CD4-positive, alpha-beta memory T cell (primary cell): ENCODE measurements at regions of chr2 and their contacts with region 1.

Region 1: DNA sequence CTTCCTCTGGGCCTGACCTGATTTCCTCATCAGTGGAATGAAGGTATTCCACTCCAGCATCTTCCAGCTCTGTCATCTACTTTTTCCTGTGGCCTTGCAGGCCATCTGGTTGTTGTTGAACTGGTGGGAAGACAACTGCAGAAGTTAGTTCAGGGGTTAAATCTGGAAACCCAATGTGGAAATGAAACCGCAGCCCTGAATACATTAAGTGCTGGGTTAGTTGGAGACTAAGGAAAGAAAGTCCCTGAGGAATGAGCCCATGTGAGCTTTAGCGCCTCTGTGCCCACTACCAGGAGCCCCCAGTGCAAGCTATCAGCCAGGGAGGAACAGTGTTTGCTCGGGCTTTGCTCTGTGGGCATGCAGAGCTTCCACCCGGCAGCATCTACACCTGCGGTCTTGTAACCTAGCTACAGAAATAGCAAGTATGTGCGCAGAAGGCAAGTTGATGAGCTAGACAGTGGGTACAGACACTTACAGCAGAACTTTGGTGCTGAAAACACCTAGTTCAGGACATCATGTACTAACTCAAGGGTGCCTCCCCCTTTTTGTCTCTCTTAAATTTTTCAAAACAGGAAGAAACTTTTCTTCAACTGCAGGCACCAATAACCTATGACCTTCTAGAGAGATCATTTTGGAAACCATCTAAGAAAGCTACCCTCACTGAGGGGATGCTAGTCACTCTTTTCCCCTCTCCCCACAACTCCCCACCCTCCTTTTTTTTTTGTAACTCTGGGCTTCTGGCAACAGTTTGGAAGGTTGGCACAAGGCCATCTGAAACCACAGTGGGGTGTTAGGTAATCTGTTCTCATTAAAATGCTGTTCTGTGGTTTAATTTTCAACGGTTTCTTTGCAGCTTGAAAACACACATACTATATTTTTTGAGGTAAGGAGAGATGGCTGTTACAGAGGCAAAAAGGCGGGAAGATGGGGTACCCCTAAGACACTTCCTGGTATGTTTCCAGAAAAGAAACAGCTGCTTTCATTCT is 18.3 kb upstream of the CXCR4 start:
- DNase-seq: peak; percentile 93 to 96 (median 95)
- H3K4me3 ChIP-seq: peak overlapping the region in 1 of 2 donors; percentile 18
- H3K4me3 Mint-ChIP-seq: peak overlapping the region; percentile 70 to 92 (median 80)
- H3K27ac ChIP-seq: peak overlapping the region; percentile 95
- H3K27ac Mint-ChIP-seq: peak overlapping the region; percentile 96 to 100 (median 99)
- H3K4me1 ChIP-seq: peaks cover 98% of the 10 kb centered on the region
- H3K4me1 Mint-ChIP-seq: peaks cover 72 to 98% (median 89%) of the 10 kb centered on the region in 4 donors
- H3K27me3 ChIP-seq: no peaks in the 10 kb centered on the region
- H3K27me3 Mint-ChIP-seq: no peaks in the 10 kb centered on the region

Region 2: DNA sequence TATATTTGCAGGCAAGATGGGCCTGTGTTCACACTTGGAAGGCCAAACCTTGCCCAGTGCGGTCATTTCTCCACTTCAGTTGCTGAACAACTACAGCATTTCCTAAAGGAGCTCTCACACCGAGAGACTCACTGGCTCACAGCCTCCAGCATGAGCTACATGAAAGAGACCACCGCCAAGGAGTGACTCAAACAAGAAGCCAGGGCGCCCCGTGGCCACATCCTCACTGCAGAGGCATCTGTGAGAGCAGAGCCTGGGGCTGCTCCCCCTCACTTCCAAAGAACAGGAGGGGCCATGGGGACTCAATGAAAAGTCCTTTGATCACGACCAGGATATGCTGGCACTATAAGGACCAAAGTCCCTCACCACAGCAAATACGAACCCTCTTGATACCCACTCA is 1467.4 kb before region 1 on chr2:
- CTCF ChIA-PET with region 1: no interaction called
- POLR2A ChIA-PET with region 1: no interaction called
- intact Hi-C with region 1: loop called (anchors 5 kb)
- DNase-seq: peak; percentile 82 to 96 (median 87)
- H3K4me3 ChIP-seq: peak overlapping the region in 1 of 2 donors; percentile 11
- H3K4me3 Mint-ChIP-seq: peak overlapping the region; percentile 45 to 77 (median 60)
- H3K27ac ChIP-seq: peak overlapping the region; percentile 59
- H3K27ac Mint-ChIP-seq: peak overlapping the region; percentile 84 to 99 (median 93)
- H3K4me1 ChIP-seq: peaks cover 77% of the 10 kb centered on the region
- H3K4me1 Mint-ChIP-seq: peaks cover 65 to 97% (median 86%) of the 10 kb centered on the region in 4 donors
- H3K27me3 ChIP-seq: no peaks in the 10 kb centered on the region
- H3K27me3 Mint-ChIP-seq: peaks cover 0 to 1% of the 10 kb centered on the region in 2 donors

Region 3: GRCh38 chr2:135701442-135701841 is 434.8 kb before region 1 on chr2:
- CTCF ChIA-PET with region 1: no interaction called
- POLR2A ChIA-PET with region 1: no interaction called
- intact Hi-C with region 1: no loop called
- DNase-seq: no peak
- H3K4me3 ChIP-seq: no peak overlapping the region
- H3K4me3 Mint-ChIP-seq: no peak overlapping the region
- H3K27ac ChIP-seq: no peak overlapping the region
- H3K27ac Mint-ChIP-seq: peak overlapping the region in 3 of 7 donors; percentile 1 to 68 (median 20)
- H3K4me1 ChIP-seq: no peaks in the 10 kb centered on the region
- H3K4me1 Mint-ChIP-seq: no peaks in the 10 kb centered on the region
- H3K27me3 ChIP-seq: no peaks in the 10 kb centered on the region
- H3K27me3 Mint-ChIP-seq: no peaks in the 10 kb centered on the region

Region 4: GRCh38 chr2:135741395-135742324 is 394.6 kb before region 1 on chr2 and contains the start of gene UBXN4:
- CTCF ChIA-PET with region 1: no interaction called
- POLR2A ChIA-PET with region 1: interaction called, 3 read pairs
- intact Hi-C with region 1: loop called (anchors 5 kb)
- DNase-seq: peak; percentile 88 to 97 (median 91)
- H3K4me3 ChIP-seq: peak within 1 kb of the TSS; percentile 53 to 80
- H3K4me3 Mint-ChIP-seq: peak within 1 kb of the TSS; percentile 94 to 99 (median 97)
- H3K27ac ChIP-seq: peak within 1 kb of the TSS; percentile 97
- H3K27ac Mint-ChIP-seq: peak within 1 kb of the TSS in 6 of 7 donors; percentile 96 to 99 (median 97)
- H3K4me1 ChIP-seq: peaks cover 40% of the 10 kb centered on the region
- H3K4me1 Mint-ChIP-seq: peaks cover 29 to 43% (median 37%) of the 10 kb centered on the region in 4 donors
- H3K27me3 ChIP-seq: no peaks in the 10 kb centered on the region
- H3K27me3 Mint-ChIP-seq: no peaks in the 10 kb centered on the region
- total RNA-seq, gene UBXN4: 116 to 121 TPM

Region 5: DNA sequence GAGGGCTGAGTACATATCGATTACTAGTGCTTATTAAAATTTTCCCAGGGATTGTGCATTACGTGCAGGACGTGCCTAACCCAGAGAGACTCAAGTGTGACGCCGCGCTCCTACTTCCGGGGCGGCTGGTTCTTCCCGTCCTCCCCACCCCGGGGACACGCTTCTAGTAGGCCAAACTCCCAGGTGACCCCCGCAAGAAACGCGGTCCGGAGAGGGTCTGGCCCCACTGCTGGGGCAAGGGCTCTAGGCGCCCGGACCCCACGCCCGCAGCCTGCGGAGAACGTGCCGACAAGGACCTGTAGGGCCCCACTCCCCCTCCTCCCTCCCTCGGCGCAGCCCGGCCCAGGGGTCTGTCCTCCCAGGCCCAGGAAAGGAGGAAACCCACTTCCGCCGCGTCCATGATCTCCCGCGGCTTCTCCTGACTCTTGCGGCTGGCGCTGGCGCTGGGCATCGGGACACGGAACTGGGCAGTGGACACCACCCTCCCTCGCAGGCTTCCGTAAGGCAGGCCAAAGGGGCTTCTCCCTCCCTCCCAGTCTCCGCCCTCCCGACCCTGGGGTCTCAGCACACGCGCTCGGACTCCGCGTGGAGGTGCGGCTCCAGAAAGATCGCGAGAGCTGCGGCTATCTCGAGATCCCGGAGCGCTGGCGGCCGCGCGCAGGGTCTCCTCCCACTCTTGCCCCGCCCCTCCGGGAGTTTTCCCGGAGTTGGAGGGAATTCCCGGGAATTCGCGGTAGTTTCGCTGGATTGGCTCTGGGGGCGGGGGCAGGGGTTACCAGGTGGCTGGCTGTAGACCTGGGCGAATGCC is 151.0 kb before region 1 on chr2 and contains the start of gene DARS1:
- CTCF ChIA-PET with region 1: interaction called, 5 read pairs
- POLR2A ChIA-PET with region 1: interaction called, 29 read pairs
- intact Hi-C with region 1: loop called (anchors 1 kb)
- DNase-seq: peak; percentile 56 to 81 (median 78)
- H3K4me3 ChIP-seq: peak within 1 kb of the TSS; percentile 43 to 82
- H3K4me3 Mint-ChIP-seq: peak within 1 kb of the TSS; percentile 95 to 99 (median 98)
- H3K27ac ChIP-seq: peak within 1 kb of the TSS; percentile 99
- H3K27ac Mint-ChIP-seq: peak within 1 kb of the TSS; percentile 96 to 100 (median 99)
- H3K4me1 ChIP-seq: peaks cover 35% of the 10 kb centered on the region
- H3K4me1 Mint-ChIP-seq: peaks cover 26 to 61% (median 35%) of the 10 kb centered on the region in 4 donors
- H3K27me3 ChIP-seq: no peaks in the 10 kb centered on the region
- H3K27me3 Mint-ChIP-seq: no peaks in the 10 kb centered on the region
- total RNA-seq, gene DARS1: 84.9 to 90.1 TPM

Region 6: DNA sequence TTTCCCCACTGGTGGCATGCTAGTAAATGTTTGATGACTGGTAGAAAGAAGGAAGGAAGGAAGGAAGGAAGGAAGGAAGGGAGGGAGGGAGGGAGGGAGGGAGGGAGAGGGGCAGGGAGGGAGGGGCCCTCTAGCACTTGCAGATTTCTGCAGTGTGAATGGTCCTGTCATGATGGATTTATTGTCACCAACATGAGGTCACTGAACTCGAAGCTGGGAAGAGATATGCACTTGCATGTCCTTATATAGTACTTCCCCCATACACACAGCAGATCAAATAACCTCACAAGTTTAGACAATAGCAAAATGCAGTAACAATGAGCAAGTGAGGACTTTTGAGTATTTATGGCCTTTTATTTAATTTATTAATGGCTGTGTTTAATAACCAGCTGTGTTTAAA is 26.2 kb after region 1 on chr2:
- CTCF ChIA-PET with region 1: no interaction called
- POLR2A ChIA-PET with region 1: interaction called, 9 read pairs
- intact Hi-C with region 1: loop called (anchors 2 kb)
- DNase-seq: no peak
- H3K4me3 ChIP-seq: no peak overlapping the region
- H3K4me3 Mint-ChIP-seq: peak overlapping the region in 3 of 8 donors; percentile 4 to 73 (median 44)
- H3K27ac ChIP-seq: no peak overlapping the region
- H3K27ac Mint-ChIP-seq: peak overlapping the region in 3 of 7 donors; percentile 43 to 90 (median 81)
- H3K4me1 ChIP-seq: peaks cover 13% of the 10 kb centered on the region
- H3K4me1 Mint-ChIP-seq: peaks cover 8 to 32% (median 18%) of the 10 kb centered on the region in 4 donors
- H3K27me3 ChIP-seq: no peaks in the 10 kb centered on the region
- H3K27me3 Mint-ChIP-seq: no peaks in the 10 kb centered on the region

Region 7: GRCh38 chr2:136327162-136327852 is 191.1 kb after region 1 on chr2:
- CTCF ChIA-PET with region 1: interaction called, 3 read pairs
- POLR2A ChIA-PET with region 1: interaction called, 65 read pairs
- intact Hi-C with region 1: loop called (anchors 1 kb)
- DNase-seq: peak; percentile 88 to 96 (median 91)
- H3K4me3 ChIP-seq: peak overlapping the region; percentile 7 to 39
- H3K4me3 Mint-ChIP-seq: peak overlapping the region; percentile 67 to 90 (median 80)
- H3K27ac ChIP-seq: peak overlapping the region; percentile 69
- H3K27ac Mint-ChIP-seq: peak overlapping the region; percentile 91 to 99 (median 98)
- H3K4me1 ChIP-seq: peaks cover 62% of the 10 kb centered on the region
- H3K4me1 Mint-ChIP-seq: peaks cover 42 to 62% (median 51%) of the 10 kb centered on the region in 4 donors
- H3K27me3 ChIP-seq: no peaks in the 10 kb centered on the region
- H3K27me3 Mint-ChIP-seq: no peaks in the 10 kb centered on the region